ENCODE measurements at regions of chr19 and their contacts with region 1.

Region 1: DNA sequence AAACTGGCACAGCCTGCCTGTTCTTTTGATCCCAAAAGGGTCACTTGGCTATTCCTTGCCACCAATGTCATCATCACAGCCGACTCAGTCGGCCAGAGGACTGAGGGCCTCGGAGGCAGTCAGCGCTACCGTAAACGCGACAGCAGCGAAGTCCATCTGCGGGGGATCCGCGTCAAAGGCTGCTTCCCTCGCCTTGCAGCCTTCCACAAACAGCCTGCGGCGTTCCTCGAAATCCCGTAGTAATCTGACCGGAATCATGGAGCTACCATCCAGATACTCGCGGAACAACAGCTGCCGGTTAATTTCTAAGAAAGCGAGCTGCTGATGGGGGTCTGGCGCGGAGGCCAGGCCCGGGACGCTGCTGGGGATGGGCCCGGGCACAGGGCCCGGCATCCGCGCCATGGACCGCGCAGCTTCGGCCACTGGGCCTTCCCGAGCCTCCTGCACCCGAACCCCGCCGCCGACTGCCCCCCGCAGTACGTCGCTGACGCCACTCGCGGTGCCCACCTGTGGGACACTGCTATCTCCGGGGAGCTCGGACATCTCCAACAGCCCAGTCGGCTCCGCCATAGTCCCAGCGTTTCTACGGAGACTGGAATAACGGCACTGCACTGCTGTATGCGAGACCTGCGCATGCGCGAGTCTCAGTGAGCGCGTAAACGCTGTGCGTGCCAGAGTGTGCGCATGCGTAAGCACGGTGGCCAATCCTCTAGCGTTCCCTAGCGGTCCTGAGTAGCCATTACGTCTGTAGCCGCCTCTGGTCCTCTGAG is at the start of gene EID2B:
- DNase-seq: peak; percentile 88 to 95 (median 92)
- H3K4me3 ChIP-seq: peak within 1 kb of the TSS; percentile 51 to 100 (median 90)
- H3K27ac ChIP-seq: peak within 1 kb of the TSS in 57 of 59 donors; percentile 10 to 97 (median 89)
- H3K27me3 ChIP-seq: no peaks in the 10 kb centered on the region
- CTCF ChIP-seq: peak; percentile 98 to 100 (median 100)
- total RNA-seq, gene EID2B: 6.6 to 20.4 (median 12.6) TPM

Region 2: GRCh38 chr19:39397360-39398296 is 134.8 kb before region 1 on chr19:
- intact Hi-C with region 1: loop called in 1 of 2 experiments (anchors 5 kb)
- DNase-seq: peak; percentile 67 to 87 (median 80)
- H3K4me3 ChIP-seq: peak overlapping the region in 12 of 59 donors; percentile 1 to 33 (median 12)
- H3K27ac ChIP-seq: peak overlapping the region in 58 of 59 donors; percentile 6 to 97 (median 82)
- H3K27me3 ChIP-seq: no peaks in the 10 kb centered on the region
- CTCF ChIP-seq: peak; percentile 86 to 99 (median 96)

Region 3: GRCh38 chr19:39474139-39474622 is 58.2 kb before region 1 on chr19:
- intact Hi-C with region 1: loop called (anchors 2 to 5 kb)
- DNase-seq: peak in 8 of 10 donors; percentile 32 to 65 (median 46)
- H3K4me3 ChIP-seq: no peak overlapping the region
- H3K27ac ChIP-seq: peak overlapping the region in 3 of 59 donors; percentile 15 to 31 (median 18)
- H3K27me3 ChIP-seq: no peaks in the 10 kb centered on the region
- CTCF ChIP-seq: peak; percentile 30 to 79 (median 65)

Region 4: GRCh38 chr19:39480337-39481228 is 51.8 kb before region 1 on chr19 and contains the start of gene TIMM50:
- intact Hi-C with region 1: loop called (anchors 2 kb)
- DNase-seq: peak; percentile 93 to 97 (median 96)
- H3K4me3 ChIP-seq: peak within 1 kb of the TSS; percentile 71 to 100 (median 97)
- H3K27ac ChIP-seq: peak within 1 kb of the TSS; percentile 2 to 95 (median 87)
- H3K27me3 ChIP-seq: no peaks in the 10 kb centered on the region
- CTCF ChIP-seq: peak in 44 of 56 donors; percentile 11 to 64 (median 38)
- total RNA-seq, gene TIMM50: 62.0 to 99.4 (median 80.0) TPM

Region 5: GRCh38 chr19:39661565-39661964 is 129.1 kb after region 1 on chr19:
- intact Hi-C with region 1: no loop called
- DNase-seq: no peak
- H3K4me3 ChIP-seq: no peak overlapping the region
- H3K27ac ChIP-seq: no peak overlapping the region
- H3K27me3 ChIP-seq: peaks cover 0 to 20% (median 0%) of the 10 kb centered on the region in 45 donors
- CTCF ChIP-seq: no peak